ENCODE measurements at regions of chr6 and their contacts with region 1.

Region 1: GRCh38 chr6:403659-404655 is 12.4 kb downstream of the IRF4 start:
- DNase-seq: no peak
- H3K4me3 ChIP-seq: no peak overlapping the region
- H3K4me3 Mint-ChIP-seq: peak overlapping the region in 6 of 7 donors; percentile 38 to 80 (median 64)
- H3K27ac ChIP-seq: no peak overlapping the region
- H3K27ac Mint-ChIP-seq: peak overlapping the region in 7 of 8 donors; percentile 37 to 72 (median 56)
- H3K4me1 ChIP-seq: peaks cover 37% of the 10 kb centered on the region
- H3K4me1 Mint-ChIP-seq: peaks cover 34 to 45% (median 42%) of the 10 kb centered on the region in 3 donors
- H3K27me3 ChIP-seq: no peaks in the 10 kb centered on the region
- H3K27me3 Mint-ChIP-seq: peaks cover 0 to 1% of the 10 kb centered on the region in 2 donors

Region 2: DNA sequence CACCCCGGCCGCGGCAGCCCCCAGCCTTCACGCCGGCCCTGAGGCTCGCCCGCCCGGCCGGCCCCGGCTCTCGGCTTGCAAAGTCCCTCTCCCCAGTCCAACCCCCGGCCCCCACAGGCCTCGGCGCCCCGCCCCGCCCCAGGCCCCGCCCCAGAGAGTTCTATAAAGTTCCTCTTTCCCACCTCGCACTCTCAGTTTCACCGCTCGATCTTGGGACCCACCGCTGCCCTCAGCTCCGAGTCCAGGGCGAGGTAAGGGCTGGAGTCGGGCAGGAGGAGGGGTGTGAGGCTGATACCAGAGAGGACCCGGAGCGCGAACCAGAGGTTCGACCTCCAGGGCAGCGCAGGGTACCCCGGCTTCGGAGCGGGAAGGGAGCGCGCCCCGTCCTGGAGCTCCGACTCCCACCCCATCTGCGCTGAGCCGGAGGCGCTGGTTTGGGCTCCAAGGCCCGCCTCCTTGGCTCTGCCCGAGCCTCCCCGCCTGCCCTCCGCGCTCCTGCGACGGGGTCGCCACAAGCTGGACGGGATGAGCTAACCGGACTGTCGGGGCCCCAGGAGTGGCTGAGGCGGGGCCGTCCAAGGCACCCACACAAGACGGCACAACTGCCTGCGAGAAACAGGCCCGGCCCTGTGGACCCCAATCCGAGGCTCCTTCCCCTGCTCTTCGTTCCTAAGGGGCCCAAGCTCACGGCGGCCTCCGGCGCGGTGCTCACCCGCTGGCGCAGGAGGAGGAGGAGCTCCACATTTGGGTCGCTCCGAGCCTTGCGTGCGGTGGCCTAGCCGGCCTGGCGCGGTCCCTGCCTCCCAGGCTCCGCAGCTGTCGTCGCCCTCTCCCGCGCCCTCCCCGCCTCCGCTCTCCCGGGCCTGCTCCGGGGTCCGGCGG is 12.2 kb before region 1 on chr6 and contains the start of gene IRF4:
- CTCF ChIA-PET with region 1: interaction called, 10 read pairs
- POLR2A ChIA-PET with region 1: interaction called, 6 read pairs
- DNase-seq: peak in 4 of 5 donors; percentile 20 to 26 (median 26)
- H3K4me3 ChIP-seq: peak within 1 kb of the TSS; percentile 79
- H3K4me3 Mint-ChIP-seq: peak within 1 kb of the TSS; percentile 91 to 99 (median 95)
- H3K27ac ChIP-seq: no peak within 1 kb of the TSS
- H3K27ac Mint-ChIP-seq: peak within 1 kb of the TSS in 6 of 8 donors; percentile 73 to 88 (median 80)
- H3K4me1 ChIP-seq: peaks cover 28% of the 10 kb centered on the region
- H3K4me1 Mint-ChIP-seq: peaks cover 24 to 34% (median 31%) of the 10 kb centered on the region in 3 donors
- H3K27me3 ChIP-seq: no peaks in the 10 kb centered on the region
- H3K27me3 Mint-ChIP-seq: peaks cover 5 to 9% of the 10 kb centered on the region in 2 donors
- total RNA-seq, gene IRF4: 700 to 703 TPM

Region 3: GRCh38 chr6:537114-537513 is 133.2 kb after region 1 on chr6:
- CTCF ChIA-PET with region 1: no interaction called
- POLR2A ChIA-PET with region 1: no interaction called
- DNase-seq: no peak
- H3K4me3 ChIP-seq: no peak overlapping the region
- H3K4me3 Mint-ChIP-seq: no peak overlapping the region
- H3K27ac ChIP-seq: no peak overlapping the region
- H3K27ac Mint-ChIP-seq: no peak overlapping the region
- H3K4me1 ChIP-seq: no peaks in the 10 kb centered on the region
- H3K4me1 Mint-ChIP-seq: no peaks in the 10 kb centered on the region
- H3K27me3 ChIP-seq: no peaks in the 10 kb centered on the region
- H3K27me3 Mint-ChIP-seq: no peaks in the 10 kb centered on the region